A673 (cell line): ENCODE measurements at regions of chr3 and their contacts with region 1.

Region 1: DNA sequence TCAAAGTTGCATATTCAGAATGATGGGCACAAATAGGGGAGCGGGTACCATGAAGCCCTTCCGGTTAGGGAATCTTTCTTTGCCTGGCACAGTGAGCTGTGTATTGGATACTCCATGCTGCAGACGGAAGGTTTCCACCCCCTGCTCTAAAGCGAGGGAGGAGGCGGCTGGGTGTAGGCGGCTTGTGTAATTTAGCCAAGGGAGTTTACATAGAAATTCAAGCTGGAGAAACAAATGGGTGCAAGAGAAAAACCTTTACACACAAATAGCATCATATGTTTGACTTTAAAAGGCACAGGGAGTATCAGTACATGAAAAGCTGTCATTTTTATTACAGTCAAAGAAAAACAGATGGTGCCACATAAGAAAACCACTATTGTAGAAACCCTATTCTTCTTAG is 59.3 kb upstream of the ADCY5 start:
- DNase-seq: no peak
- H3K4me3 ChIP-seq: no peak overlapping the region
- H3K27ac ChIP-seq: no peak overlapping the region
- H3K4me1 ChIP-seq: no peaks in the 10 kb centered on the region
- H3K27me3 ChIP-seq: no peaks in the 10 kb centered on the region
- CTCF ChIP-seq: no peak

Region 2: GRCh38 chr3:123524981-123525380 is 16.8 kb after region 1 on chr3:
- CTCF ChIA-PET with region 1: no interaction called
- POLR2A ChIA-PET with region 1: interaction called, 14 read pairs
- intact Hi-C with region 1: no loop called
- DNase-seq: no peak
- H3K4me3 ChIP-seq: no peak overlapping the region
- H3K27ac ChIP-seq: no peak overlapping the region
- H3K4me1 ChIP-seq: peaks cover 7% of the 10 kb centered on the region
- H3K27me3 ChIP-seq: no peaks in the 10 kb centered on the region
- CTCF ChIP-seq: no peak